Activated CD8-positive, alpha-beta T cell treated with anti-CD3 and anti-CD28 coated beads, Interleukin-2, amount 10 ng/mL, durations not matched to agents 7 days and 5 days (primary cell): ENCODE measurements at regions of chr16 and their contacts with region 1.

Region 1: DNA sequence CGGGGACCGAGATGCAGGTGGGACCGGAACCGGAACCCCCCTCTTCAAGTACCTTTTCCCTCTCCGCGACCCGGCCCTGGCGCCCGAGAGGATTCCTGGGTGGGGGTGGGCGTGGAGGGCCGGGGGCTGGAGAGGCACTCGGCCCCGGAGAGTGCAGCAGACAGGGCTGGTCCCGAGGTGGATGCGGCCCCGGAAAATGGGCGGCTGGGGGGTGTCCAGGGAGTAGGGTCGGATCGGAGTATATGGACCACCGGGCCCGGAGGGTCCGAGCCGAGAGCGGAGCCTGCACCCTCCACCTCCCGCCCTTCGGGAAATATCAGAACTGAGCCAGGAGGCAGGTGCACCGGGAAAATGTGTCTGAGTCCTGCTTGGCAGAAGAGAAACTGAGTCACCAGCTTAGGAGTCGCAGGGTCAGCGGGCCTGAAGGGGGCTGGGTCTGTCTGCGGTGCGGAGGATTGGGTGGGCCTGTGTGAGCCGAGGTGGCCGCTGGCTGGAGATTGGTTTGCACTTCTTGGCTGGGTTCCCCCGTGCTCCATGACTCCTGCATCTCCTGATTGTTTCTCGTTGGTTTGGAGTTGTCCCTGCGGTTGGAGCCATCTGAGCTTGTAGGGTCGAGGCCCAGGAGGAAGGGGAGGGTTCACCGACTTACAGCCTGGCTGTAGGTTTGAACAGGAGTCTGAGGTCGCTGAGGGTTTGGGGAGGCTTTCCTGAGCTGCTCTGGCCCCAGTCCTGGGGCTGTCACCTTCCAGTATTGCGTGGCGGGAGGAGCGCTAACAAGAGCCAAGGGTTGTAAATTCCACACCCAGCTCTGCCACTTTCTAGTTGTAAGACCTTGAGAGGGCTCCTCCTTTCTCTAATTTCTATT is 518 bp downstream of the SH2B1 start:
- DNase-seq: peak; percentile 36
- ATAC-seq: peak; percentile 2
- H3K4me3 Mint-ChIP-seq: peak overlapping the region; percentile 97
- H3K27ac Mint-ChIP-seq: peak overlapping the region; percentile 96
- H3K4me1 Mint-ChIP-seq: peaks cover 31% of the 10 kb centered on the region
- H3K27me3 Mint-ChIP-seq: no peaks in the 10 kb centered on the region

Region 2: DNA sequence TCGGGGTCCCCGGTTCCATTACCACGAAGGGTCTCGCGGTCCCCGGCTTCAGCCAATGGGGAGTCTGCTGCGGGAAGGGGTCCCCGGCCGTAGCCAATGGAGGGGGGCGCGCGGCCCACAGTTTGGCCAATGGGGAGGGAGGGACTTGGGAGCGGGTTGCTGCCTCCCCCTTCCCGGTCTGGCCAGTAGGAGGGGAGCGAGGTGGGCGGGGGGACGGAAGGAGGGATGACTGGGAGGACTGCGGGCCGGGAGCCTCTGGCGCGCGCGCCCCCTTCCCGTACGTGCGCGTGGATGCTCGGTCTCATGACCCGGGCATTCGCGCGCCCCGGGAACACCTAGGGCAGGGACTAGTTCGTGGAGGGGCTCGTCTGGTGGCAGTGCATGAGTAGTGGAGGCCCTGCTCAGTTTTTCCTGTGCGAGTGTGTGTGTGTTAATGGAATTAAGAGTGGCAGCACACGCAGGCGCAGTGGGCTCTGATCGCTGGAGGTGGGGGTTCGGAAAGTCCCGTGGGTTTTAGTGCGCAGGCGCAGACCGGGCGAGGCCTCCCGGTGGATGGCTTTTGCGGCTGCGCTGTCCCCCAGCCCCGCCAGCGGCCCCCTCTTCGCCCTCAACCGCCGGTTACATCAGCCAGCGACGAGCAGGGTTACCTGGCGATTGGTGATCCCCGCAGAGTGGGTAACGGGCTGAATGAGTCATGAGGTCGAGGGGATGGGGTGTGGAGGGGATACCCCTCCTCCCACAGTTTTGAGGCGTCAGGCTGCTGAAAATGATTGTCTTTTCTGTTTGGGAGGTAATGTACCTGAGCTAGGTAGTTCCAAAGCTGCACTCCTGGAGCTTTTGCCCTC is 40.1 kb before region 1 on chr16:
- CTCF ChIA-PET with region 1: no interaction called
- POLR2A ChIA-PET with region 1: interaction called, 41 read pairs
- DNase-seq: peak; percentile 98
- ATAC-seq: peak; percentile 76
- H3K4me3 Mint-ChIP-seq: peak overlapping the region; percentile 93
- H3K27ac Mint-ChIP-seq: peak overlapping the region; percentile 96
- H3K4me1 Mint-ChIP-seq: peaks cover 45% of the 10 kb centered on the region
- H3K27me3 Mint-ChIP-seq: no peaks in the 10 kb centered on the region

Region 3: DNA sequence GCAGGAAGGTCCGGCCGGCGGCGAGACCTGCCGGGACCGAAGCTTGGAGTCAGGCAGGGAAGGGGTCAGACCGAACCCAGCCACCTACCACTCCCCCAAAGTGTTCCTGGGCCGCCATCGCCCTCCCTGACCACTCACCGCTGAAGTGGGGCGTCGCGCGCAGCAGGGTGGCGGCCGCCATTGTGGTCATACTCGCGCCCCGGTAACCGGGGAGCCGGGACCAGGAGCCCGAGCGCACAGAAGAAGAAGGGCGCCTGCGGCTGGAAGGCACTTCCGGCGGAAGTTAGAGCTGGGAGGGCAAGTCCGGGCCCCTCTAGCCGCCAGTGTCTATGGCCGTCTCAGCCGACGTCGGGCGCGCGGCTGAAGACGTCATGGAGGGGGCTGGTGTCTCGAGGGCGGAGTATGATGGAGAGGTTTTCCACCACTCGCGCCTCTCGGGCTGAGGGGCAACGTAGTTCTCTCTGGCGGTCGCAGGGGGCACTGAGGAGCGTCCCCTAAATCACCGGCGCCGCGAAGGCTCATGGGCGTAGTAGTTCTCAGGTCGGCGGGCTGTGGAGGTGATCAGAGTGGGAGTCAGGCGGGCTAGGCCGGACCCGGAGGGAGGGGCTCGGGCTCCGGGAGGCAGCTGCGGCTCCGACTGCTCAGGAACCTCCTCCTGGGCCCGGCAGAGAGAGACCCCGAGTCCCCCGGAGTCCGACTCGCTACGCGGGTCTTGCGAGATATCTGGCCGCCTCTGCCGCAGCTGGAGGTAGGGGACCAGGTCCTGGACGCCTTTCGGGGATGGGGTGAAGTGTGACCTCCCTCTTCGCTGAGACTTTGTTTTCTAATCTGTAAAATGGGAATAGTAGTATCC is 17.9 kb before region 1 on chr16 and contains the start of gene TUFM:
- CTCF ChIA-PET with region 1: interaction called, 19 read pairs
- POLR2A ChIA-PET with region 1: interaction called, 59 read pairs
- DNase-seq: peak; percentile 99
- ATAC-seq: peak; percentile 92
- H3K4me3 Mint-ChIP-seq: peak within 1 kb of the TSS; percentile 92
- H3K27ac Mint-ChIP-seq: peak within 1 kb of the TSS; percentile 94
- H3K4me1 Mint-ChIP-seq: peaks cover 27% of the 10 kb centered on the region
- H3K27me3 Mint-ChIP-seq: no peaks in the 10 kb centered on the region
- total RNA-seq, gene TUFM: 150 to 153 TPM

Region 4: GRCh38 chr16:28879841-28880588 is 15.9 kb after region 1 on chr16:
- CTCF ChIA-PET with region 1: interaction called, 4 read pairs
- POLR2A ChIA-PET with region 1: interaction called, 26 read pairs
- DNase-seq: peak; percentile 94
- ATAC-seq: peak; percentile 97
- H3K4me3 Mint-ChIP-seq: peak overlapping the region; percentile 93
- H3K27ac Mint-ChIP-seq: peak overlapping the region; percentile 83
- H3K4me1 Mint-ChIP-seq: peaks cover 38% of the 10 kb centered on the region
- H3K27me3 Mint-ChIP-seq: peaks cover 6% of the 10 kb centered on the region

Region 5: DNA sequence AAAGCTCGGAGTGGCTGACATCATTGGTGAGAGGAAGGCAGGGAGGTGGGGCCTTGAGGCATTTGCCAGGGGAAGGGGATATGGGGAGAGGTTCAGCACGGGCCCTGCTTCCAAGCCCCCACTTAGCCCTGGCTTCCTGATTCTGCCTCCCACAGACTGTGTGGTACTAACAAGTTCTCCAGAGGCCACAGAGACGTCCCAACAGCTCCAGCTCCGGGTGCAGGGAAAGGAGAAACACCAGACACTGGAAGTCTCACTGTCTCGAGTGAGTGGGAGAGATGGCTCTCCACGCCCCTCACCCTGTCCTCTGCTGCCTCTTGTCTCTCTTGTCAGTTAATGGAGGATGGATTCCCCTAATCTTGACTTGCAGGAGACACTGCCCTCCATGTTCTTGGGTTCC is 94.7 kb after region 1 on chr16:
- CTCF ChIA-PET with region 1: no interaction called
- POLR2A ChIA-PET with region 1: no interaction called
- DNase-seq: no peak
- ATAC-seq: no peak
- H3K4me3 Mint-ChIP-seq: no peak overlapping the region
- H3K27ac Mint-ChIP-seq: peak overlapping the region; percentile 43
- H3K4me1 Mint-ChIP-seq: peaks cover 5% of the 10 kb centered on the region
- H3K27me3 Mint-ChIP-seq: no peaks in the 10 kb centered on the region